Posterior vena cava (tissue), 2 donors: ENCODE measurements at regions of chr10 and their contacts with region 1.

Region 1: GRCh38 chr10:85916994-85917573 is 449.5 kb downstream of the GRID1 start:
- DNase-seq: no peak

Region 2: DNA sequence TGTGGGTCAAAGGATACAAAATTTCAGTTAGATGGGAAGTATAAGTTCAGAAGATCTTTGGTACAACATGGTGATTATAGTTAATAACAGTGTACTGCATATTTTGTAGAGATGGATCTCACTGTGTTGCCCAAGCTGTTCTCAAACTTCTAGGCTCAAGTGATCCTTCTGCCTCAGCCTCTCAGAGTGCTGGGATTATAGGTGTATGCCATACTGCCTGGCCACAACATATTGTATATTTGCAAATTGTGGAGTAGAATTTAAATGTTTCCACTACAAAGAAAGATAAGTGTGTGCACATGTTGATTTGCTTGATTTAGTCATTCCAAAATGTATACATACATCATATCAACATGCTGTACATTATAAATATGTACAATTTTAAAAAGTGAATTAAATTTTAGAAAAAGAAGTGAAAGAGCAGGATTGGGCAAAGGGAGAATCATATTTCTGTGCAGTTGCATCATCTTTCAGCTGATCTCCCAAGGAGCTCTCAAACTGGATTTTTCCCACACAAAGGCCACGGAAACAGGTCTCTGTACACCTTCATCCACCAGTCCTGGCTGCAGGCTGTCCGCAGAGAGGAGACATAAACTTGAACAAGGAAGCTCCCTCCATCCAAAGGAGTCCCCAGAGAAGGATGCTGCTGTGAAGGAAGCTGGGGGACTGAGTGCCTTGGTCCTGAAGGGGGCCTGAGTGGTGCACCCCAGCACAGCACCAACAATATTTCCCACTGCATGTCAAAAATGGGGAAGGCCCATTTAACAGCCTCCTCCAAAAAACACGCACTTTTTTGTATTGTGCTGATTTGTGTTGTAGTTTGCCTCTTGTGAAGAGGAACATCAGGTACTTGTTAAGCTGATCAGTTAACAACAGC is 1994.9 kb before region 1 on chr10:
- intact Hi-C with region 1: loop called in 1 of 2 experiments (anchors 5 kb)
- DNase-seq: no peak

Region 3: DNA sequence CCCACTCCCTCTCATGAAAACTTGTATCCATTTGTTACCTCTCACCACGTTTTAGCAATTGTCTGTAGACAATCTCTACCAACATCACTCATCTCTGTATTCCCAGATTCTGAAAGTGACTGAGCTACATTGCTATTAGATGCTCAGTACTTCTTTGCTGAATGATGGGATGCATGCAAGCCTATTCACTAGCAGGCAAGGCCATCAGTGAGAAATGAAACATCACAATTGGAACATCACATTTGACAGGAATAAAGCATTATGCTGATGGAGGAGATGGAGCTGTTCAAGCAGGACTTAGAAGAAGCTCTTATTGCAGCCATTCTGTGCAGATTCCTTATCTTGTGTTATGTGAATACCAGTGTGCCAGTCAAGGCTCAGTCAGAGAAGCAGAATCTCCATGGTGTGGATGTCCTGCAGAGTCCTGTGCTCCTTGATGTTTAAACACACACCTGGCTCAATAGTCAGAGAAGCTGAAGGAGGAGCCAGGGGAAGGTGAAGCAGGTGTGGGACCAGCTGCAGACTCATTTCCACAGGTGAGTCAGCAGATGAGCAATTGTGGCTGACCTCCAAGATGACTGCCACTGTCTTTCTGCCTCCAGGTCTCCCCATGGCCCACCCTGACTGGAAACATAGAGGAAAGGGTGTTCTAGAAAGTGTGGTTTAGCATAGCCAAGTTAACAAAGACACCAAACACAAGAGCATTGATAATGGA is 515.9 kb before region 1 on chr10:
- intact Hi-C with region 1: loop called in 1 of 2 experiments (anchors 10 kb)
- DNase-seq: no peak

Region 4: DNA sequence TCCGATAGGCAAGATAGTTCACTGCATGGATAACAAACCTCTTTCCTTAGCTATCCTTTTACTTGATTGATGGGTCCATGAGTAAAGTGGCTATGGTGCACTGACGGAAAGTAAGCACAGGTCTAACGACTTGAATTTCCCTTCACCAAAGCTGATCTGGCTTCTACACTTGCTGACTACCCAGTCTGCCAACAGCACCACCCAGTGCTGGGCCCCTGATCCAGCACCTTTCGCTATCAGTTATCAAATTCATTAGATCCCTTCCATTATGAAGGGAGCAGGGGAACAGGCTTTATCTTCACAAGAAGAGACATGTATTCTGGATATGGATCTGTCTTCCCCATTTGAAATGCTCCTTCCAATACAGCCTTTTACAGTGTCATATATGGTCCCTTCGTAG is 406.4 kb before region 1 on chr10:
- intact Hi-C with region 1: no loop called
- DNase-seq: no peak

Region 5: DNA sequence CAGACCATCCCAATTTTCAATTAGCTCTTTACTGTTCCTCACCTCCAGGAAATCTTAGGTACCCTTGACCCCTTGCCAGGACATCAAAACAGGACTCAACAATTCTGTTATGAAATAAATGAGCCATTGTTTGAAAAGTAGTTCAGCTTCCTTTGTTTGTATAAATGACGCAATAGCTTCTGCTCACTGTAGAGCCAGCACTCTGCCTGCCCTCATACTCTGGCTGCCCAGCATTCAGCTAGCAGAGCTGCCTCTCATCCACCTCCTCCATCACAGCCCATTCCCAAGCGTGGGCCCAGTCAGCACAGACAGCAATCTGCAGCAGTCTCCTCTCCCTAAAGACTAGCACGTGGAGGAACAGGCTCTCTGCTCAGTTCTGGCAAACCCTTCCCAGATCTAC is 29.1 kb before region 1 on chr10:
- intact Hi-C with region 1: no loop called
- DNase-seq: no peak